ENCODE measurements at regions of chr11 and their contacts with region 1.

Region 1: GRCh38 chr11:73307323-73308002 is 613 bp upstream of the ARHGEF17 start:
- DNase-seq: peak; percentile 99
- ATAC-seq: peak; percentile 85
- H3K4me3 ChIP-seq: peak overlapping the region; percentile 86
- H3K27ac ChIP-seq: peak overlapping the region; percentile 72
- H3K4me1 ChIP-seq: peaks cover 9% of the 10 kb centered on the region
- H3K27me3 ChIP-seq: no peaks in the 10 kb centered on the region
- CTCF ChIP-seq: peak; percentile 97

Region 2: GRCh38 chr11:72793425-72794367 is 513.8 kb before region 1 on chr11 and contains the start of gene STARD10:
- CTCF ChIA-PET with region 1: interaction called, 12 read pairs
- POLR2A ChIA-PET with region 1: interaction called, 15 read pairs
- intact Hi-C with region 1: no loop called
- DNase-seq: peak; percentile 99
- ATAC-seq: peak; percentile 95
- H3K4me3 ChIP-seq: peak within 1 kb of the TSS; percentile 77
- H3K27ac ChIP-seq: peak within 1 kb of the TSS; percentile 40
- H3K4me1 ChIP-seq: peaks cover 27% of the 10 kb centered on the region
- H3K27me3 ChIP-seq: no peaks in the 10 kb centered on the region
- CTCF ChIP-seq: peak; percentile 99
- total RNA-seq, gene STARD10: 284 and 362 TPM in 2 replicates

Region 3: DNA sequence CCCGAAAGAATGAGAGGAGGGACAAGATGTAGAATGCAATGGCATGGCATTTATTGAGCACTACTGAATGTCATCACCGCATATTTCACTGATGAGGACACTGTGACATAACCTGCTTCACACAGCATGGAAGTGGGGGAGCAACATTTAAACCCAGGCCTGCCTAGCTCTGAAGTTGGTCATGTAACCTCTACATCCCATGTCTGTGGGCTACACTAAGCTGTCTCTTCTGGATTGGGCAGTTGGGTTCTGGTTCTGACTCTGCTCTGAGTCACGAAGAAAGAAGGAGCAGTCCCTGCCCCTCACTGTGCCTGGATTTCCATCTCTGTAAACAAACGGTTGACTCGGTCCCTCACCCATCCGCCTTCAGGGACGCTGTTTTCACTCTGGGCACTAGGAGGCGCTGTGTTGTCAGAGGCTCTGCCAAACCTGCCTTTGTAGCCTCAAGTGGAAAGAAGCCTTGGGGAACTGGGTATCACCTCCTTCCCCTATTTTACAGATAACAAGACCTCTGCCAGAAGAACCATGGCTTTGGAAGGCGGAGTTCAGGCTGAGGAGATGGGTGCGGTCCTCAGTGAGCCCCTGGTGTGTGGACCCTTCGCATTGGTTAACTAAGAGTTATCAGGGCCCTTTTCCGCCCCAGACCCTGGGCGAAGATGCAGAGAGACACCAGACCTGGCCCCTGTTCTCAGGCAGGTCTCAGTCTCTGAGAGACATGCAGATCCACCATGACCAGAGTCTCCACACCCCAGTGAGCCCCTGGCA is 12.1 kb before region 1 on chr11:
- CTCF ChIA-PET with region 1: interaction called, 10 read pairs
- POLR2A ChIA-PET with region 1: no interaction called
- intact Hi-C with region 1: no loop called
- DNase-seq: peak; percentile 94
- ATAC-seq: peak; percentile 82
- H3K4me3 ChIP-seq: no peak overlapping the region
- H3K27ac ChIP-seq: no peak overlapping the region
- H3K4me1 ChIP-seq: peaks cover 10% of the 10 kb centered on the region
- H3K27me3 ChIP-seq: no peaks in the 10 kb centered on the region
- CTCF ChIP-seq: peak; percentile 99

Region 4: GRCh38 chr11:73335204-73335923 is 27.9 kb after region 1 on chr11:
- CTCF ChIA-PET with region 1: interaction called, 48 read pairs
- POLR2A ChIA-PET with region 1: no interaction called
- intact Hi-C with region 1: loop called (anchors 1 kb)
- DNase-seq: peak; percentile 94
- ATAC-seq: peak; percentile 80
- H3K4me3 ChIP-seq: no peak overlapping the region
- H3K27ac ChIP-seq: no peak overlapping the region
- H3K4me1 ChIP-seq: peaks cover 13% of the 10 kb centered on the region
- H3K27me3 ChIP-seq: no peaks in the 10 kb centered on the region
- CTCF ChIP-seq: peak; percentile 98

Region 5: DNA sequence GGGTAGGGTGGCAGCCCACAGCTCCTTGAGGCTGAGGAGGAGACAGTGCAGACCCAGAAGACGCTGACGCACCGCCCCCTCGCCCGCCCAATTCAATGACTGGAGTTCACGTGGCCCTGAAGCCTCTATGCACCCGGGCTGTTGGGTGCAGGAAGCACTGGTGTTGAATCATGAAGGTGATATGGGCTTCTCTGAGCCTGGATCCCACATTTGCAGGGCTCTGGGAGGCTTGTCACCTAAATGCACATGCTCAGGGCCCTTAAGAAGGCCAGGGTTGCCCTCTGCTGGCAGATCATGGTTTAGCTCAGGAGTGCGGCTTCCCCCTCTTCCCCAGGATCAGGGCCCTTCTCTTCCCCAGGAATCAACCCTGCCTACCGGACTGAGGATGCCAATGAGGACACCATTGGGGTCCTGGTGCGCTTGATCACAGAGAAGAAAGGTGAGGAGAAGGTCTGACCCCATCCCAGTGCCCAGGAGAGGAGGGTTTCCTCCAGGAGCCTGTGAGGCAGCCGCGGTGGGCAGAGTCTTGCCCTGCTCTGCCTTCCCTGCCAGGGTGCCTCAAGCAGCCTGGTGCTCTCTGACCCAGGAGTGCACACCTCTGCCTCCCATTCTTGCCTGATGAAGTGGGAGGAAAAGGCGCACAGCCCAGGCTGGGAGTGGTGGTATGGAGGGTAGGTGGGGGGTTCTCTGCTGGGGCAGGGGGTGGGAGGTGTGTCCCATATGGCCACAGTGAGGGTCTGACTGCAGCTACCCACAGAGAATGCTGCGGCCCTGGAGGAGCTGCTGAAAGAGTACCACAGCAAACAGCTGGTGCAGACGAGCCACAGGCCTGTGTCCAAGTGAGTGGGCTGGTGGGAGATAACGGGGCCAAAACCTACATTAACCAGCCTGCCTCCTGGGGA is 86.3 kb after region 1 on chr11:
- CTCF ChIA-PET with region 1: interaction called, 7 read pairs
- POLR2A ChIA-PET with region 1: interaction called, 6 read pairs
- intact Hi-C with region 1: loop called (anchors 2 kb)
- DNase-seq: peak; percentile 84
- ATAC-seq: peak; percentile 85
- H3K4me3 ChIP-seq: no peak overlapping the region
- H3K27ac ChIP-seq: no peak overlapping the region
- H3K4me1 ChIP-seq: no peaks in the 10 kb centered on the region
- H3K27me3 ChIP-seq: no peaks in the 10 kb centered on the region
- CTCF ChIP-seq: peak; percentile 93

Measured in PC-3 (cell line).